ENCODE measurements at regions of chr5 and their contacts with region 1.

Region 1: DNA sequence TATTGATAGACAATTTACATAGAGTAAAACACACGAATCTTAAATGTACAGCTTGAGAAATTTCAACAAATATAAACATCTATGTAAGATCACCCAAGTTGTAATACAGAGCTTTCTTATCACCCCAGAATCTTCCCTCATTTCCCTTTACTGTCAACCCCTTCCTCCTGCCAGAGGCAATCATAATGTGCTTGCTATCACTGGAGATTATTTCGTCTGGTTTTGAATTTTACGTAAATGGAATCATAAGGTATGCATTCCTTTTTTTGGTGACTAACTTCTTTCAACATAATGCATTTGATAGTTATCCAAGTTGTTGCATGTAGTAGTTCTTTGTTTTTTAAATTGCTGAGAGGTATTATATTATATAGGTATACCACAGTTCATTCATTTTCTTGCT is 37.4 kb upstream of the GPR151 start:
- DNase-seq: no peak
- ATAC-seq: no peak
- H3K4me3 Mint-ChIP-seq: no peak overlapping the region
- H3K27ac Mint-ChIP-seq: no peak overlapping the region
- H3K4me1 Mint-ChIP-seq: no peaks in the 10 kb centered on the region
- H3K27me3 Mint-ChIP-seq: peaks cover 15% of the 10 kb centered on the region

Region 2: GRCh38 chr5:146249801-146250200 is 303.6 kb before region 1 on chr5:
- CTCF ChIA-PET with region 1: no interaction called
- POLR2A ChIA-PET with region 1: no interaction called
- intact Hi-C with region 1: no loop called
- DNase-seq: no peak
- ATAC-seq: no peak
- H3K4me3 Mint-ChIP-seq: no peak overlapping the region
- H3K27ac Mint-ChIP-seq: no peak overlapping the region
- H3K4me1 Mint-ChIP-seq: peaks cover 11% of the 10 kb centered on the region
- H3K27me3 Mint-ChIP-seq: no peaks in the 10 kb centered on the region

Region 3: GRCh38 chr5:146541958-146542849 is 11.2 kb before region 1 on chr5:
- CTCF ChIA-PET with region 1: interaction called, 10 read pairs
- POLR2A ChIA-PET with region 1: no interaction called
- intact Hi-C with region 1: no loop called
- DNase-seq: peak; percentile 85
- ATAC-seq: peak; percentile 93
- H3K4me3 Mint-ChIP-seq: no peak overlapping the region
- H3K27ac Mint-ChIP-seq: no peak overlapping the region
- H3K4me1 Mint-ChIP-seq: no peaks in the 10 kb centered on the region
- H3K27me3 Mint-ChIP-seq: no peaks in the 10 kb centered on the region

Region 4: GRCh38 chr5:146867996-146868708 is 314.7 kb after region 1 on chr5:
- CTCF ChIA-PET with region 1: no interaction called
- POLR2A ChIA-PET with region 1: no interaction called
- intact Hi-C with region 1: no loop called
- DNase-seq: no peak
- ATAC-seq: peak; percentile 36
- H3K4me3 Mint-ChIP-seq: no peak overlapping the region
- H3K27ac Mint-ChIP-seq: no peak overlapping the region
- H3K4me1 Mint-ChIP-seq: no peaks in the 10 kb centered on the region
- H3K27me3 Mint-ChIP-seq: peaks cover 2% of the 10 kb centered on the region

Region 5: GRCh38 chr5:147093160-147093559 is 539.7 kb after region 1 on chr5:
- CTCF ChIA-PET with region 1: no interaction called
- POLR2A ChIA-PET with region 1: no interaction called
- intact Hi-C with region 1: no loop called
- DNase-seq: no peak
- ATAC-seq: no peak
- H3K4me3 Mint-ChIP-seq: no peak overlapping the region
- H3K27ac Mint-ChIP-seq: no peak overlapping the region
- H3K4me1 Mint-ChIP-seq: no peaks in the 10 kb centered on the region
- H3K27me3 Mint-ChIP-seq: peaks cover 6% of the 10 kb centered on the region

Region 6: GRCh38 chr5:147930769-147931168 is 1377.3 kb after region 1 on chr5:
- CTCF ChIA-PET with region 1: no interaction called
- POLR2A ChIA-PET with region 1: no interaction called
- intact Hi-C with region 1: no loop called
- DNase-seq: no peak
- ATAC-seq: no peak
- H3K4me3 Mint-ChIP-seq: no peak overlapping the region
- H3K27ac Mint-ChIP-seq: no peak overlapping the region
- H3K4me1 Mint-ChIP-seq: no peaks in the 10 kb centered on the region
- H3K27me3 Mint-ChIP-seq: peaks cover 7% of the 10 kb centered on the region